ENCODE measurements at regions of chr17 and their contacts with region 1.

Region 1: DNA sequence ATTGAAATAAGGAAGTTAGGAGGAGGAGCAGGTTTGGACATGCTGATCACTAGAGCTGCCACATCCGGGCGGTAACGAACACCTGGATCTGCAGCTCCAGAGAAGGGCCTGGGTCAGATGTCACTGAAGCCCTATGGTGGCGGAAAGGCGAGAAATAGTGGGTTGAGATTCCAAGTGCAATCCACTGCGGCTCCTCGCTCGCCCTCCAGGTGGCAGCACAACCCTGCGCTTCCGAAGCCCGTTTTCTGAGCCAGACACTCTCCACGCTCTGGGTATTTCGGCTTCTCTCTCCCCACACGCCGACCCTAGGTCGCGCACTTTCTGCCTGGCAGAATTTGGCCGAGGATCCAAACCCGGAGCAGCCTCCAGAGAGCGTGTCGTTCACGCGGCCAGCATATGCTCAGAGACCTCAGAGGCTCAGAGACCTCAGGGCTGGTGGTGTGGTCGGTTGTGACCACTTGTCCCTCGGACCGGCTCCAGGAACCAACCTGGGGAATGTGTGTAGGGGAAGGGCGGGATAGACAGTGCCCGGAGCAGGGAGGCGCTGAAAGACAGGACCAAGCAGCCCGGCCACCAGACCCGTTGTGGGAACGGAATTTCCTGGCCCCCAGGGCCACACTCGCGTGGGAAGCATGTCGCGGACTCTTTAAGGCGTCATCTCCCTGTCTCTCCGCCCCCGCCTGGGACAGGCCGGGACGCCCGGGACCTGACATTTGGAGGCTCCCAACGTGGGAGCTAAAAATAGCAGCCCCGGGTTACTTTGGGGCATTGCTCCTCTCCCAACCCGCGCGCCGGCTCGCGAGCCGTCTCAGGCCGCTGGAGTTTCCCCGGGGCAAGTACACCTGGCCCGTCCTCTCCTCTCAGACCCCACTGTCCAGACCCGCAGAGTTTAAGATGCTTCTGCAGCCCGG is 744 bp upstream of the SLC2A4 start:
- DNase-seq: peak; percentile 86
- ATAC-seq: peak; percentile 64 to 80 (median 77)
- H3K4me3 ChIP-seq: peak overlapping the region in 9 of 10 donors; percentile 41 to 66 (median 61)
- H3K27ac ChIP-seq: peak overlapping the region; percentile 84 to 98 (median 92)
- H3K4me1 ChIP-seq: peaks cover 0 to 54% (median 28%) of the 10 kb centered on the region in 9 donors
- H3K27me3 ChIP-seq: peaks cover 0 to 39% (median 0%) of the 10 kb centered on the region in 7 donors
- CTCF ChIP-seq: peak; percentile 79 to 97 (median 95)

Region 2: GRCh38 chr17:6969323-6969726 is 311.4 kb before region 1 on chr17:
- intact Hi-C with region 1: no loop called
- DNase-seq: no peak
- ATAC-seq: no peak
- H3K4me3 ChIP-seq: no peak overlapping the region
- H3K27ac ChIP-seq: no peak overlapping the region
- H3K4me1 ChIP-seq: no peaks in the 10 kb centered on the region
- H3K27me3 ChIP-seq: peaks cover 0 to 5% (median 0%) of the 10 kb centered on the region in 7 donors
- CTCF ChIP-seq: no peak

Region 3: GRCh38 chr17:7296189-7296902 is 15.6 kb after region 1 on chr17:
- intact Hi-C with region 1: loop called in 9 of 10 experiments (anchors 1 to 2 kb)
- DNase-seq: peak; percentile 81 to 88
- ATAC-seq: peak; percentile 71 to 93 (median 78)
- H3K4me3 ChIP-seq: peak overlapping the region in 7 of 10 donors; percentile 7 to 32 (median 14)
- H3K27ac ChIP-seq: peak overlapping the region; percentile 35 to 85 (median 80)
- H3K4me1 ChIP-seq: peaks cover 18 to 53% (median 49%) of the 10 kb centered on the region in 9 donors
- H3K27me3 ChIP-seq: peaks cover 0 to 57% (median 34%) of the 10 kb centered on the region in 7 donors
- CTCF ChIP-seq: peak; percentile 91 to 99 (median 96)

Region 4: DNA sequence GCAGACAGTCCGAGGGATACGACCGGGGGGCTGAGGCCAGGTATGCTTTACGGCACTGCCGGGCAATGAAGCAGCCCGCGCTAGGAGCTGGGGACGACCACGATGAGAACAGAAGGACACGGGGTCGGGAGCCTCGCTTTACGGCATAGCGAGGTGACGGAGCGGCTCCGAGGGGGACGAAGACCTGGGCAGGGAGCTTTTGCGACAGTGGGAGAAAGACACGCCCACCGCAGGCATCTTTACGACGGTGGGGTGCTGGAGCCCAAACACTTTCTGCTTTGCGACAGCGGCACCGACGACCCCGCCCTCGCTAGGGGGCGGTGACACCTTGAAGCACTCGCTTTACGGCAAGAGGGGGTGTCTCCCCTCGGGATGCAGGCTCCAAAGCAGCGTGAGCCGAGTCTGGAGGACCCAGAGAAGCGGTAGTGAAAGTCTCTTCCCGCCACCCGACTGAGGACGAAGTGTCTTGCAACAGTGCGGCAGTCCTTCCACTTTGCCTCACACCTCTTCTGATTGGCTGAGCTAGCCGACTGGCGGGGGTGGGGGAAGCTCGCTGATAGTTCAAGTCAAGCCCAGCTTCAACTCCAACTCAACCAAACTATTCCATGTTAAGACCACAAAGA is 48.7 kb after region 1 on chr17:
- intact Hi-C with region 1: loop called in 1 of 10 experiments (anchors 1 kb)
- DNase-seq: peak; percentile 98
- ATAC-seq: peak; percentile 84 to 94 (median 91)
- H3K4me3 ChIP-seq: peak overlapping the region; percentile 70 to 94 (median 85)
- H3K27ac ChIP-seq: peak overlapping the region; percentile 55 to 96 (median 89)
- H3K4me1 ChIP-seq: peaks cover 0 to 27% (median 20%) of the 10 kb centered on the region in 9 donors
- H3K27me3 ChIP-seq: peaks cover 0 to 8% (median 1%) of the 10 kb centered on the region in 7 donors
- CTCF ChIP-seq: peak in 3 of 9 donors; percentile 20 to 28 (median 24)

Region 5: GRCh38 chr17:7344399-7344798 is 63.6 kb after region 1 on chr17:
- intact Hi-C with region 1: loop called in 6 of 10 experiments (anchors 2 to 5 kb)
- DNase-seq: no peak
- ATAC-seq: no peak
- H3K4me3 ChIP-seq: no peak overlapping the region
- H3K27ac ChIP-seq: no peak overlapping the region
- H3K4me1 ChIP-seq: peaks cover 0 to 12% (median 5%) of the 10 kb centered on the region in 9 donors
- H3K27me3 ChIP-seq: peaks cover 0 to 28% (median 4%) of the 10 kb centered on the region in 7 donors
- CTCF ChIP-seq: no peak

Region 6: GRCh38 chr17:8091033-8091687 is 810.4 kb after region 1 on chr17:
- intact Hi-C with region 1: no loop called
- DNase-seq: no peak
- ATAC-seq: no peak
- H3K4me3 ChIP-seq: no peak overlapping the region
- H3K27ac ChIP-seq: no peak overlapping the region
- H3K4me1 ChIP-seq: no peaks in the 10 kb centered on the region
- H3K27me3 ChIP-seq: peaks cover 0 to 79% (median 48%) of the 10 kb centered on the region in 7 donors
- CTCF ChIP-seq: no peak

Measured in heart right ventricle (tissue), 16 donors.